ENCODE measurements at regions of chr5 and their contacts with region 1.

Region 1: DNA sequence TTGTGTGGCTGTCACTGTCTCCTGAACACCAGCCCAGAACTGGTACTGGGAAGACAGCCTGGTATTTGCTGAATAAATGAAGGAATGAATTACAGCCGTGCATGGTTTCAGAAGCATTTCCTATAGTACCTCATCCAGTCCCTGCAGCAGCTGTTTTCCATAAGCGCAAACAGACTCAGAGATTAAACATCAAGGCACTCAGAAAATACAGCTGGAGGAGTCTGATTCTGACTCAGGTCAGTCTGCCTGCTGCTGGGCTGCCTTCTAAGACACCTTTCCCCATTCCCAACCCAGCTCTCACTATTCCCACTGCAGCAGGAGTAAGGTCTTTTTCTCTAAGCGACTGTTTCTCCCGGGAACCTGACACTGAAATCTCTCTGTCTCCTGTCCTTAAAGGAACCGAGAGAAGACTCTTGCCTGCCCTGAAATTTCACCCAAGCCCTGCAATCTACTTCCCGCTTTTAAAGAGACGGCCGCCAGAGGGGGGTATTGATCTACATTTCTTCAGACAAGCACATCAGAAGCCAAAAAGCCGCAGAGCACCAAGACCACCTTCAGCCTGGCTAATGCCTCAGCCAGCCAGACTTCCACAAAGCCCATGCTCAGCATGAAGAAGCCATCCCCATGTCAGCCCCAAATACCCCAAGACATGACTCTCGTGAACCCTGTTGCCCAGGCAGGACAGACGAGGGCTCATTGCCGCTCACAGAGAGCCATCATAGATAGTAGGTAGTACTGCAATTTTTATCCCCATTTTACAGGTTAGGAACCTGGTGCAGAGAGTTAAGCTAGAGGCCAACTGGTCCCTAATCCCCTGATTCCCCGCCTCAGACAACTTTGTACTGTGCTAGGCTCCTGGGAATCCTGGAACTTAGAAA is 5.4 kb upstream of the FOXI1 start:
- DNase-seq: peak; percentile 88
- H3K4me3 Mint-ChIP-seq: no peak overlapping the region
- H3K27ac Mint-ChIP-seq: no peak overlapping the region
- H3K4me1 Mint-ChIP-seq: peaks cover 1% of the 10 kb centered on the region
- H3K27me3 Mint-ChIP-seq: peaks cover 6% of the 10 kb centered on the region

Region 2: DNA sequence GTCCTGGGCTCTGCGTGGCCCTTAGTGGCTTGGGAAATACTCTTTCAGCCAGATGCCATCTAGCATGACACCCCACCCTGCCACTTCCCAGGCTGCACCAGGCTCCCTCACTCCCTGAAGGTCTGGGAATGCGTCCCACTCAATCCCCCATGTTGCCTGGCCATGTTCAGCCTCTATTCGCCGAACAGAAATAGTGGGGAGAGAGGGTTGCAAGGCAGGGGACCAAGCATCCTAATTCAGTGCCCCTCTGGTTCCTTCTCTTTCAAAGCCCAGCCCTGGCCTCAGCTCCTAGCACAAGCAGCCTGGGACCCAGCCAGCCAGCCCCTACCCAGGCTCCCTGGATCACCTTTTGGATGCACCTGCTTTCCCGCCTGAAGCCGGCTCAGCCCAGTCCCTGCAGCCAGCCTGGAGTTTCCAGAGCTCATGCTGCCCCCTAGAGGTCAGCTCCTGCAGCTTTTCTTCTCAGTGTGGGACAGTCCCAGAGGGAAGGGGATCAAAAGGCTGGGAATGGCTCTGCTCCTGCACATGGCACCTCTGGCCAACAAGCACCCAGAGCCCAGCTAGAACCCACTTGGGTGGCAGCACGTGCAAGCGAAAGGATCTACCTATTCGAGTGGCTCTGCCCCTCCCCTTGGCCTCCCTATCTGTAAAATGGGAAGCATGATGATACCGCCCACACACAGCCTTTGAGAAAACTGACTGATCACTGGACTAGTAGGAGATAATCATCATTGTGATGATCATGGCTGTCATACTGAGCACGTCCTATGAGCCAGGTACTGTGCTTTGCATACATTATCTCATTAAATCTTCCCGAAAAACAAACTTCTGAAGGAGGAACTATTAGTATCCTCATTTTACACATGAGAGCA is 83.7 kb after region 1 on chr5:
- intact Hi-C with region 1: loop called (anchors 1 kb)
- DNase-seq: peak; percentile 84
- H3K4me3 Mint-ChIP-seq: no peak overlapping the region
- H3K27ac Mint-ChIP-seq: no peak overlapping the region
- H3K4me1 Mint-ChIP-seq: no peaks in the 10 kb centered on the region
- H3K27me3 Mint-ChIP-seq: peaks cover 8% of the 10 kb centered on the region

Region 3: GRCh38 chr5:170216266-170216864 is 116.1 kb after region 1 on chr5:
- intact Hi-C with region 1: loop called (anchors 10 kb)
- DNase-seq: no peak
- H3K4me3 Mint-ChIP-seq: no peak overlapping the region
- H3K27ac Mint-ChIP-seq: no peak overlapping the region
- H3K4me1 Mint-ChIP-seq: no peaks in the 10 kb centered on the region
- H3K27me3 Mint-ChIP-seq: peaks cover 25% of the 10 kb centered on the region

Region 4: DNA sequence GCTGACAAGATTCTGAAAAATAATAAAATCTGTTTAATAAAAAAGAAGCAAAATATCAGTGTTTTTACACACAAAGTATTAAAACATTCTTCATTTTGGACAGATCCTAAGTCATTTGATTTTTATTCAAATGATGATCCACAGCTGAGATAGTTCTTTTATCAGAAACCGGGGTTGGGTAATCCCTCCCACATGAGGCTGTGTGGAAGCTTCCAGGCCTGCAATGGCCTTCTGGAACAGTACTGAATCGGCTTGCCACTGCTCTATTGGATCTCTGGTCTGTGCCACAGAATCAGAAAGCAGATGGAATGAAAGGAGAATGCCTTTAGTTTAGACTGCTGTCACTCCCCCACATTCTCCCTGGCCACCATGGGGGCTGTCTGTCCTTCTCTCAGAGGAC is 126.4 kb after region 1 on chr5:
- intact Hi-C with region 1: no loop called
- DNase-seq: no peak
- H3K4me3 Mint-ChIP-seq: no peak overlapping the region
- H3K27ac Mint-ChIP-seq: no peak overlapping the region
- H3K4me1 Mint-ChIP-seq: peaks cover 9% of the 10 kb centered on the region
- H3K27me3 Mint-ChIP-seq: no peaks in the 10 kb centered on the region

Region 5: GRCh38 chr5:170338933-170339779 is 238.9 kb after region 1 on chr5:
- intact Hi-C with region 1: loop called (anchors 1 kb)
- DNase-seq: peak; percentile 88
- H3K4me3 Mint-ChIP-seq: no peak overlapping the region
- H3K27ac Mint-ChIP-seq: peak overlapping the region; percentile 55
- H3K4me1 Mint-ChIP-seq: peaks cover 39% of the 10 kb centered on the region
- H3K27me3 Mint-ChIP-seq: no peaks in the 10 kb centered on the region

Region 6: GRCh38 chr5:170420780-170421412 is 320.6 kb after region 1 on chr5:
- intact Hi-C with region 1: loop called (anchors 1 kb)
- DNase-seq: peak; percentile 85
- H3K4me3 Mint-ChIP-seq: no peak overlapping the region
- H3K27ac Mint-ChIP-seq: no peak overlapping the region
- H3K4me1 Mint-ChIP-seq: peaks cover 6% of the 10 kb centered on the region
- H3K27me3 Mint-ChIP-seq: peaks cover 26% of the 10 kb centered on the region